CD4-positive, alpha-beta memory T cell (primary cell): ENCODE measurements at regions of chr5 and their contacts with region 1.

Region 1: GRCh38 chr5:32531885-32532520 is 53.4 kb upstream of the SUB1 start:
- DNase-seq: peak; percentile 61 to 90 (median 69)
- H3K4me3 ChIP-seq: peak overlapping the region; percentile 42 to 68
- H3K4me3 Mint-ChIP-seq: peak overlapping the region; percentile 87 to 93 (median 90)
- H3K27ac ChIP-seq: peak overlapping the region; percentile 94
- H3K27ac Mint-ChIP-seq: peak overlapping the region; percentile 94 to 99 (median 97)
- H3K4me1 ChIP-seq: peaks cover 58% of the 10 kb centered on the region
- H3K4me1 Mint-ChIP-seq: peaks cover 37 to 66% (median 50%) of the 10 kb centered on the region in 4 donors
- H3K27me3 ChIP-seq: no peaks in the 10 kb centered on the region
- H3K27me3 Mint-ChIP-seq: no peaks in the 10 kb centered on the region

Region 2: DNA sequence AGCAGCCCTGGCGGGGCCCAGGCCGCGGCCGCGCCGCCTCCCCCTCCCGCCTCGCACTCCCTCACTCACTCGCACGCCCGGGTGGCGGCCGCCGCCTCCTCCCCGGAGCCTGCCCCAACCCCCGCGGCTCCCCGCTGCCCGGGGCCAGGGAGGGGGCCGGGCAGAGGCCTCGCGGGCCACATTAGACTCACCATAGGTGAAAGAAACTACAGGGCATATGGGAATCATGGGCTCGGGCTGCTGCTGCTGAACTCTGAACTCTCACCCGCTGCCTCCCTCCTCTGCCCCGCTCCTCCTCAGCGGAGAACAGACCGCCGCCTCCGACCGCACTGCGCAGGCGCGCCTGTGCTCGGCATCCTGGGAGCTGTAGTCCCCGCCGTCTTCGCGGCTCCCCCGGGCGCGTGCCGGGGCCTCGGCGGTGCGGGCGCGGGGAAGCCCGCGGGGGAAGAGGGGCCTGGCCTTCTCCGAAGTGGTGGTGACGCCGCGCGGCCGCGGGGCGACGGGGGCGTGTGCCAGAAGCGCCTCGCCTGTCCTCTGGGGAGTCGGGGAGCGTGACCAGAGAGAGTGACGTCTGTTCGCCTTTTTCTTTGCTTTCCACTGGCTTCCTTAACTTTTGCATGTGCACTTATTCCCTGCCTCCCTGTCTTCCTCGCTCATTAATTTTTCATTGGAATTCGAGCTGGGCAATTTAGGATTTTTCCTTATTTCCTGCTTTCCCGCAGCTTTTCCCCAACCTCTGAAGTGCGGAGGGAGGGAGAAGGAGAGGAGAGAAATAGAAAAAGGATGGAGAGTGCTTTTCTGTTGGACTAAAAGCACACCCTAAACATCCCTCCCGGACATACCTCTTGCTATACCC is 87.3 kb before region 1 on chr5 and contains the start of gene ZFR:
- CTCF ChIA-PET with region 1: no interaction called
- POLR2A ChIA-PET with region 1: no interaction called
- intact Hi-C with region 1: loop called (anchors 5 kb)
- DNase-seq: peak; percentile 93 to 95 (median 95)
- H3K4me3 ChIP-seq: peak within 1 kb of the TSS; percentile 53 to 88
- H3K4me3 Mint-ChIP-seq: peak within 1 kb of the TSS; percentile 93 to 97 (median 94)
- H3K27ac ChIP-seq: peak within 1 kb of the TSS; percentile 90
- H3K27ac Mint-ChIP-seq: peak within 1 kb of the TSS; percentile 91 to 97 (median 96)
- H3K4me1 ChIP-seq: peaks cover 43% of the 10 kb centered on the region
- H3K4me1 Mint-ChIP-seq: peaks cover 19 to 40% (median 30%) of the 10 kb centered on the region in 4 donors
- H3K27me3 ChIP-seq: no peaks in the 10 kb centered on the region
- H3K27me3 Mint-ChIP-seq: no peaks in the 10 kb centered on the region
- total RNA-seq, gene ZFR: 60.1 to 65.4 TPM

Region 3: GRCh38 chr5:32794086-32794485 is 262.1 kb after region 1 on chr5:
- CTCF ChIA-PET with region 1: no interaction called
- POLR2A ChIA-PET with region 1: no interaction called
- intact Hi-C with region 1: no loop called
- DNase-seq: no peak
- H3K4me3 ChIP-seq: no peak overlapping the region
- H3K4me3 Mint-ChIP-seq: no peak overlapping the region
- H3K27ac ChIP-seq: no peak overlapping the region
- H3K27ac Mint-ChIP-seq: no peak overlapping the region
- H3K4me1 ChIP-seq: no peaks in the 10 kb centered on the region
- H3K4me1 Mint-ChIP-seq: no peaks in the 10 kb centered on the region
- H3K27me3 ChIP-seq: no peaks in the 10 kb centered on the region
- H3K27me3 Mint-ChIP-seq: peaks cover 0 to 1% of the 10 kb centered on the region in 2 donors

Region 4: GRCh38 chr5:32805971-32806638 is 274.1 kb after region 1 on chr5:
- CTCF ChIA-PET with region 1: no interaction called
- POLR2A ChIA-PET with region 1: no interaction called
- intact Hi-C with region 1: no loop called
- DNase-seq: no peak
- H3K4me3 ChIP-seq: no peak overlapping the region
- H3K4me3 Mint-ChIP-seq: no peak overlapping the region
- H3K27ac ChIP-seq: no peak overlapping the region
- H3K27ac Mint-ChIP-seq: no peak overlapping the region
- H3K4me1 ChIP-seq: no peaks in the 10 kb centered on the region
- H3K4me1 Mint-ChIP-seq: no peaks in the 10 kb centered on the region
- H3K27me3 ChIP-seq: no peaks in the 10 kb centered on the region
- H3K27me3 Mint-ChIP-seq: no peaks in the 10 kb centered on the region

Region 5: GRCh38 chr5:33330426-33330825 is 798.4 kb after region 1 on chr5:
- CTCF ChIA-PET with region 1: no interaction called
- POLR2A ChIA-PET with region 1: no interaction called
- intact Hi-C with region 1: no loop called
- DNase-seq: no peak
- H3K4me3 ChIP-seq: no peak overlapping the region
- H3K4me3 Mint-ChIP-seq: no peak overlapping the region
- H3K27ac ChIP-seq: no peak overlapping the region
- H3K27ac Mint-ChIP-seq: no peak overlapping the region
- H3K4me1 ChIP-seq: no peaks in the 10 kb centered on the region
- H3K4me1 Mint-ChIP-seq: no peaks in the 10 kb centered on the region
- H3K27me3 ChIP-seq: no peaks in the 10 kb centered on the region
- H3K27me3 Mint-ChIP-seq: peaks cover 0 to 2% of the 10 kb centered on the region in 2 donors